A549 (cell line): ENCODE measurements at regions of chr15 and their contacts with region 1.

Region 1: DNA sequence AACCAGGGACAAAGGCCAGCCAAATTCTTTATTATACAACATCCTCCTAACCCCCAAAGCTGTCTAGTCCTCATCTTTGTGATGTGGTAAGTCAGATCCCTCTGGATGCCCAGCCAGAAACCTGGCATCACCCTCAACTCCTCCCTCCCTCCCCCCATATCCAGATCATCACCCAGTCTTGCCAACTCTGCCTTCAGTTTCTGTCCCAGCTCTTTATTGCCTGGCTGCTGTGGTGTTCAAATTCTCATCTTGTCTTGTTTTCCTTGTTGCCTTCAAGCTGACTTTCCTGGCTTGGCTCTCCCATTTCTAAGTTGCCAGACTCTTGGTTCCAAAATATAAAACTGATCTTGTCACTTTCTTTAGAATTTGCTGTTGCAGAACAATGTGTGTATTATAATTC is 28.6 kb downstream of the MAP2K1 start:
- DNase-seq: no peak
- ATAC-seq: no peak
- H3K4me3 ChIP-seq: no peak overlapping the region
- H3K27ac ChIP-seq: no peak overlapping the region
- H3K4me1 ChIP-seq: no peaks in the 10 kb centered on the region
- CTCF ChIP-seq: no peak
- EP300 ChIP-seq: no peak
- POLR2A ChIP-seq: no peak
- RAD21 ChIP-seq: no peak

Region 2: GRCh38 chr15:66401130-66402021 is 14.0 kb before region 1 on chr15:
- CTCF ChIA-PET with region 1: interaction called, 18 read pairs
- POLR2A ChIA-PET with region 1: no interaction called
- DNase-seq: peak in 1 of 2 experiments; percentile 45
- ATAC-seq: peak; percentile 56 to 70; a peak in 4 of 6 replicates
- H3K4me3 ChIP-seq: no peak overlapping the region
- H3K27ac ChIP-seq: no peak overlapping the region
- H3K4me1 ChIP-seq: peaks cover 20% of the 10 kb centered on the region
- CTCF ChIP-seq: no peak
- EP300 ChIP-seq: no peak
- POLR2A ChIP-seq: no peak
- RAD21 ChIP-seq: no peak